ENCODE measurements at regions of chr1 and their contacts with region 1.

Region 1: GRCh38 chr1:201268604-201269151 is 14.6 kb upstream of the PKP1 start:
- DNase-seq: no peak
- H3K4me3 ChIP-seq: no peak overlapping the region
- H3K27ac ChIP-seq: no peak overlapping the region
- H3K4me1 ChIP-seq: no peaks in the 10 kb centered on the region
- H3K27me3 ChIP-seq: no peaks in the 10 kb centered on the region
- CTCF ChIP-seq: no peak
- POLR2A ChIP-seq: no peak

Region 2: DNA sequence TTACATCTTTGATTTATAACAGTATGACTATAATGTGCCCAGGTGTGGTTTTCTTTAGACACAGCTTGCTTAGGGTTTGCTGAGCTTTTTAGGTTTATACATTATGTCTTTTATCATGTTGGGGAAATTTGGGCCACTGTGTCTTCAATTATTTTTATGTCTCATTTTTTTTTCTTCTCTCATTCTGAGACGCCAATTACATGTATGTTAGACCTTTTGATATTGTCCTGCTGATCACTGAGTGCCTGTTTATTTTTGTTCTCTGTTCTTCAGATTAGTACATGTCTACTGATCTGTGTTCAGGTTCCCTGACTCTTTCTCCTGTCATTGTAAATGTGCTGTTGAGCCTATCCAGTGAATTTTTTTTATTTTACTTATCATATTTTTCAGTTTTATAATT is 72.7 kb after region 1 on chr1:
- intact Hi-C with region 1: loop called (anchors 2 kb)
- DNase-seq: no peak
- H3K4me3 ChIP-seq: no peak overlapping the region
- H3K27ac ChIP-seq: no peak overlapping the region
- H3K4me1 ChIP-seq: no peaks in the 10 kb centered on the region
- H3K27me3 ChIP-seq: no peaks in the 10 kb centered on the region
- CTCF ChIP-seq: no peak
- POLR2A ChIP-seq: no peak

Measured in breast epithelium (tissue), 4 donors.